Natural killer cell (primary cell): ENCODE measurements at regions of chr12 and their contacts with region 1.

Region 1: GRCh38 chr12:104108755-104109445 is 29.1 kb downstream of the NFYB start:
- DNase-seq: peak; percentile 72 to 92
- ATAC-seq: peak; percentile 89 to 98 (median 95)
- H3K4me3 ChIP-seq: no peak overlapping the region
- H3K4me3 Mint-ChIP-seq: peak overlapping the region; percentile 43
- H3K27ac ChIP-seq: no peak overlapping the region
- H3K27ac Mint-ChIP-seq: peak overlapping the region in 1 of 2 donors; percentile 44
- H3K4me1 ChIP-seq: no peaks in the 10 kb centered on the region
- H3K4me1 Mint-ChIP-seq: peaks cover 16 to 18% of the 10 kb centered on the region in 2 donors
- H3K27me3 ChIP-seq: no peaks in the 10 kb centered on the region
- H3K27me3 Mint-ChIP-seq: no peaks in the 10 kb centered on the region
- CTCF ChIP-seq: peak; percentile 86

Region 2: GRCh38 chr12:103877934-103878510 is 230.9 kb before region 1 on chr12:
- intact Hi-C with region 1: loop called (anchors 1 kb)
- DNase-seq: peak; percentile 17 to 82
- ATAC-seq: peak; percentile 55 to 77 (median 73)
- H3K4me3 ChIP-seq: no peak overlapping the region
- H3K4me3 Mint-ChIP-seq: no peak overlapping the region
- H3K27ac ChIP-seq: no peak overlapping the region
- H3K27ac Mint-ChIP-seq: no peak overlapping the region
- H3K4me1 ChIP-seq: peaks cover 4% of the 10 kb centered on the region
- H3K4me1 Mint-ChIP-seq: peaks cover 5 to 6% of the 10 kb centered on the region in 2 donors
- H3K27me3 ChIP-seq: no peaks in the 10 kb centered on the region
- H3K27me3 Mint-ChIP-seq: no peaks in the 10 kb centered on the region
- CTCF ChIP-seq: peak; percentile 70

Region 3: GRCh38 chr12:104057771-104058197 is 51.1 kb before region 1 on chr12:
- intact Hi-C with region 1: loop called (anchors 1 kb)
- DNase-seq: peak in 1 of 2 donors; percentile 53
- ATAC-seq: peak in 2 of 3 donors; percentile 42 to 64
- H3K4me3 ChIP-seq: no peak overlapping the region
- H3K4me3 Mint-ChIP-seq: no peak overlapping the region
- H3K27ac ChIP-seq: no peak overlapping the region
- H3K27ac Mint-ChIP-seq: no peak overlapping the region
- H3K4me1 ChIP-seq: no peaks in the 10 kb centered on the region
- H3K4me1 Mint-ChIP-seq: no peaks in the 10 kb centered on the region
- H3K27me3 ChIP-seq: no peaks in the 10 kb centered on the region
- H3K27me3 Mint-ChIP-seq: peaks cover 25 to 31% of the 10 kb centered on the region in 2 donors
- CTCF ChIP-seq: peak; percentile 64

Region 4: GRCh38 chr12:104072099-104072498 is 36.8 kb before region 1 on chr12:
- intact Hi-C with region 1: no loop called
- DNase-seq: no peak
- ATAC-seq: no peak
- H3K4me3 ChIP-seq: no peak overlapping the region
- H3K4me3 Mint-ChIP-seq: no peak overlapping the region
- H3K27ac ChIP-seq: no peak overlapping the region
- H3K27ac Mint-ChIP-seq: no peak overlapping the region
- H3K4me1 ChIP-seq: no peaks in the 10 kb centered on the region
- H3K4me1 Mint-ChIP-seq: peaks cover 16 to 18% of the 10 kb centered on the region in 2 donors
- H3K27me3 ChIP-seq: no peaks in the 10 kb centered on the region
- H3K27me3 Mint-ChIP-seq: no peaks in the 10 kb centered on the region
- CTCF ChIP-seq: no peak

Region 5: DNA sequence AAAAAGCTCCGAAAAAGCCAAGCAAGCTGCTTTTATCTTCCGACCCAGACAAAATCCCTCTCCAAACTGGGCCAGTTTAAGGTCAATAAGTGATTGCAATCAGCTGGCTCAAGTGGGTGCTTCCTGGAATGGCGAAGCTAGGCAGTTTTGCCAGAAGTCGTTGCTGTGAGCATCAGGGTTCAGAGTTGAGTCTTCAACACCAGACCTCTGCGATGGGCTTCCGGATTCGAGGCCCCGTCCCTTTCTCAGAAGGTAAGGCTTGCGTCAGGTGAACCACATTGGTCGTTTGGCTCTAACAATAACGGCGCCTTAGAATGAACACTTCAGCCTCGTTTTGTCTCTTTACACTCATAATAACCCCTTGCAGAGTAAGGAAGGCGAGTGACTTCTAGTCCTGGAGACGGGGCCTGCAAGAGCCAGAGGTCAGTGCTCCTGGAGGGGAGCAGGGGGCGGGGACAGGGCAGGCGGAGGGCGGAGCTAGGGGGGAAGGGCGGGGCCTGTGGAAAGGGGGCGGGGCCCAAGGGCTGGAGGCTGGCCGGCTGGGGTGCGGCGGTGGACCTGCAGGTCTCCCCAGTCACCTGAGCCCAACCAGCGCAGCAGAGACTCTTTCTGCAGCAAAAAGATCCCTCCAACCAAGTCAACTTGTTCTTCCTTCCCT is 63.0 kb after region 1 on chr12:
- intact Hi-C with region 1: no loop called
- DNase-seq: no peak
- ATAC-seq: no peak
- H3K4me3 ChIP-seq: no peak overlapping the region
- H3K4me3 Mint-ChIP-seq: no peak overlapping the region
- H3K27ac ChIP-seq: no peak overlapping the region
- H3K27ac Mint-ChIP-seq: no peak overlapping the region
- H3K4me1 ChIP-seq: no peaks in the 10 kb centered on the region
- H3K4me1 Mint-ChIP-seq: no peaks in the 10 kb centered on the region
- H3K27me3 ChIP-seq: no peaks in the 10 kb centered on the region
- H3K27me3 Mint-ChIP-seq: peaks cover 4 to 9% of the 10 kb centered on the region in 2 donors
- CTCF ChIP-seq: no peak